ENCODE measurements at regions of chr9 and their contacts with region 1.

Region 1: GRCh38 chr9:72592502-72593403 is 71.3 kb downstream of the TMC1 start:
- DNase-seq: no peak
- ATAC-seq: peak; percentile 72

Region 2: GRCh38 chr9:72038890-72039410 is 553.8 kb before region 1 on chr9:
- intact Hi-C with region 1: loop called (anchors 10 kb)
- DNase-seq: peak; percentile 74
- ATAC-seq: peak; percentile 80

Region 3: GRCh38 chr9:72280913-72281500 is 311.7 kb before region 1 on chr9:
- intact Hi-C with region 1: loop called (anchors 2 kb)
- DNase-seq: peak; percentile 87
- ATAC-seq: peak; percentile 78

Region 4: DNA sequence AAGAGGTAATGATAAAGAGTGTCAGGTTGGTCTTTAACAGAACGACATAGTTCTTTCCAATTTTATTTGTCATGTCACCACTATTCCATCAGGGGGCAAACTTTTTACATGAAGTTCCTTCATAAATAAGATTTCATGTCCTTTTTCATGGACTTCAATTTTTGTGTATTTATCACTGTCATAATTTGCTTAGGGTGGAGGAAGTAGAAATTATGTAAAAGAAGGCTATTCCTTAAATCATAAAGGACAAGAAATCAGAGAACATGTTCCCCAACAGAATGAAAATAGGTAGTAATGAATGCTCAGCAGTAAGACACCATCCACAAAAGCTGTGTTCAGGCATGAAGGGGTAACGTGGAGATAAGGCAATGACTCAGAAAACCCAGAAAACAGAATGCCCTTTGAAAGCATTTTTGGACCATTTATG is 300.5 kb before region 1 on chr9:
- intact Hi-C with region 1: loop called (anchors 2 kb)
- DNase-seq: no peak
- ATAC-seq: peak; percentile 46

Region 5: GRCh38 chr9:72364679-72365524 is 227.9 kb before region 1 on chr9 and contains the start of gene ZFAND5:
- intact Hi-C with region 1: loop called (anchors 5 kb)
- DNase-seq: peak; percentile 100
- ATAC-seq: peak; percentile 96
- total RNA-seq, gene ZFAND5: 174 TPM

Region 6: DNA sequence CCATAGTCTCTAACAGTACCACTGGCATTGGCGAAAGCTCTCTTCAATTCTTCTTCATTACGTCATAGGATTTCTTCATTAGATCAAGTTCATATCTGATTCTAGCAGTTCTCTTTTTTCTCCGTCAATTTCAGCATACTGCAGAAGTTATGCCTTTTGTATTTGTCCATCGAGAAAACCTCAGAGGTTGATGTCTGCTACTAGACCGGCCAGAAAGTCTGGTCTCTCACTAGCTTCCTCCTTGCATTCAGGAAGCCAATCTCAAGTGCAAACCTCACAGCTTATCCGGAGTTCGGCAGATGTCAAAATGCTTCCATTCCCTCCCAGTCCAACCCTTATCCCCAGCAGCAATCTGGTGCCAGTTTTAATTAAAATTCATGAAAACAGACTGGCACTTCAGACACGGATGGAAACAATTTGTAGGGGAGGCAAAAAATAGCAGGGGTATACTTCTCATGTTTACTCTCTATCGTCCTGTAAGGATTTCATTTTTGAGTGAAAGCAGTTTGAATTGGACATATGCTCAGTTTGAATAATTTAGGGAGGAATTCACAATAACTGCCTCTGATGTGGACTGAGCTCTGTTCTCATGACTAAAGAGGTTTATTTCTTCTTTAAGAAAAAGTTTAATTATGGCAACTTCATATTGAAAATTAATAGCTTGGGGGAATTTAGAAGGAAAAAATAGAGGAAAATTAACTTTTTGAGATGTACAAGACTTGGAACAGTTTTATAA is 127.7 kb before region 1 on chr9:
- intact Hi-C with region 1: loop called (anchors 10 kb)
- DNase-seq: no peak
- ATAC-seq: peak; percentile 46

Region 7: GRCh38 chr9:72489986-72490385 is 102.8 kb before region 1 on chr9:
- intact Hi-C with region 1: no loop called
- DNase-seq: no peak
- ATAC-seq: no peak

Region 8: DNA sequence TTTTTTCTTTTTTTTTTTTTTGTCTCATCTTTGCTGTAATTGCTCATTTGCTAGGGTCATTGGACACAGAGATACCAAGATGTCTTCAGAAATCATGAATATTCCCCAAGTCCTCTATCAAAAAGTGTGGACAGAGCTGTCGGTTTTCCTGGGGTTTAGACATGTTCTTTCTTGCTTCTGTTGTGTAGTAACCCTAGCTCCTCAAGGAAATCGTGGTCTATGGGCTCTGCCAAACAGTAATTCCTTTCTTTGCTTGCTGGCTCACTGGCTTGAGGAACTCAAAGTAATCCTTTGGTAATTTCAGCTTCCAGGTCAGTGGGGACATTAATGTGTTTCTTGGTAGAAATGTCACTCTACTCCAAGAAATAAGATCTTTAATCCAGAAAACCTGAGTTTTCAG is 30.4 kb after region 1 on chr9:
- intact Hi-C with region 1: no loop called
- DNase-seq: no peak
- ATAC-seq: no peak

Region 9: GRCh38 chr9:72827950-72828731 is 235.4 kb after region 1 on chr9:
- intact Hi-C with region 1: loop called (anchors 10 kb)
- DNase-seq: no peak
- ATAC-seq: no peak

Region 10: GRCh38 chr9:72937545-72937944 is 344.8 kb after region 1 on chr9:
- intact Hi-C with region 1: no loop called
- DNase-seq: no peak
- ATAC-seq: peak; percentile 50